Tibial artery (tissue), 4 donors: ENCODE measurements at regions of chr7 and their contacts with region 1.

Region 1: GRCh38 chr7:32347244-32347828 is 142.8 kb downstream of the LSM5 start:
- DNase-seq: peak in 1 of 2 donors; percentile 31
- H3K4me3 ChIP-seq: no peak overlapping the region
- H3K27ac ChIP-seq: no peak overlapping the region
- H3K4me1 ChIP-seq: no peaks in the 10 kb centered on the region
- H3K27me3 ChIP-seq: no peaks in the 10 kb centered on the region
- CTCF ChIP-seq: peak; percentile 56 to 70

Region 2: GRCh38 chr7:32218154-32218467 is 129.2 kb before region 1 on chr7:
- intact Hi-C with region 1: loop called (anchors 10 kb)
- DNase-seq: no peak
- H3K4me3 ChIP-seq: no peak overlapping the region
- H3K27ac ChIP-seq: no peak overlapping the region
- H3K4me1 ChIP-seq: no peaks in the 10 kb centered on the region
- H3K27me3 ChIP-seq: no peaks in the 10 kb centered on the region
- CTCF ChIP-seq: no peak